A549 (cell line): ENCODE measurements at regions of chr15 and their contacts with region 1.

Region 1: DNA sequence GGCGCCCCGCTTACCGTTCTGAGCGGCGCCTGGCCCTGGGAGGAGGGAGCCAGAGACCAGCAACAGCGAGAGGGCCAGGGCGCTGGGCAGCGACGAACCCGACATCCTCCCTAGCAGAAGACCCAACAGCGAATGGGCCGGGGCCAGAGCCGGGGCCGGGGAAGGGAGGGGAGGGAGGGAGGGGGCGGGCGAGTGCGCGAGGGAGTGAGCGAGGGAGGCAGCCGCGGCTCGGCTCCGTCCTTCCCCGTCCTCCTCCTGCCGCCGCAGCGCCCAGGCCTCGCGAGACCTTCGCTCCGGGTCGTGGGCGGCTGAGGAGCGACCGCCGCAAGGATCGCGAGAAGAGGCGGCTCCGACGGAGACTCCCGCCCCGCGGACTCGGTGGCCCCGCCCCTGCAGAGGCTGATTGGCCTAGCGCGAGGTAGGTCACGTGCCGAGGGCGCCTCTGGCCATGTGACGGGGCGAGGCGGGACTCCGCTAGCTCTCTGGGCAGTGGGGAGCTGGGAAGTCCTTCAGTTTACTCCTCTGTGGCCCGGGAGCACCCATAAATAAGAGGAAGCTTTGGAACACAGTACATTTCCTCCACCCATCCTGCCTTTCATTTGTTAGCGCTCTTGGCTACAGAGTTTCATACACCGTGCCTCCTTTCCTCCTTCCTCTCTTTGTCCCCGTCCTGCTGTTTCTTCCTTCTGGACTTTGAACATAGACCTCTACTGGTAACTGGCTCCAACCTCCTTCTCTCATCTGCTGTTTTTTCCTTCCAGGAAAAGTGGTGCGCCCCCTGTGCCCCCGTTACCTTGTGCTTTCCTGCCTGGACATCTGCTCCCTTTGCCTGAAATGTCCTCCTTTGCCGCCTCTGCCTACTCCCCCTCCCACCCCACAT is at the start of gene NPTN:
- DNase-seq: peak; percentile 96 to 98
- ATAC-seq: peak; percentile 87 to 94
- H3K4me3 ChIP-seq: peak within 1 kb of the TSS; percentile 96
- H3K27ac ChIP-seq: peak within 1 kb of the TSS; percentile 95 to 96
- H3K4me1 ChIP-seq: peaks cover 51% of the 10 kb centered on the region
- CTCF ChIP-seq: peak; percentile 13; the same call in 1 of the 3 replicates
- EP300 ChIP-seq: no peak
- POLR2A ChIP-seq: peak; percentile 87
- RAD21 ChIP-seq: no peak
- polyA plus RNA-seq, gene NPTN: 201 and 253 TPM in 2 replicates

Region 2: DNA sequence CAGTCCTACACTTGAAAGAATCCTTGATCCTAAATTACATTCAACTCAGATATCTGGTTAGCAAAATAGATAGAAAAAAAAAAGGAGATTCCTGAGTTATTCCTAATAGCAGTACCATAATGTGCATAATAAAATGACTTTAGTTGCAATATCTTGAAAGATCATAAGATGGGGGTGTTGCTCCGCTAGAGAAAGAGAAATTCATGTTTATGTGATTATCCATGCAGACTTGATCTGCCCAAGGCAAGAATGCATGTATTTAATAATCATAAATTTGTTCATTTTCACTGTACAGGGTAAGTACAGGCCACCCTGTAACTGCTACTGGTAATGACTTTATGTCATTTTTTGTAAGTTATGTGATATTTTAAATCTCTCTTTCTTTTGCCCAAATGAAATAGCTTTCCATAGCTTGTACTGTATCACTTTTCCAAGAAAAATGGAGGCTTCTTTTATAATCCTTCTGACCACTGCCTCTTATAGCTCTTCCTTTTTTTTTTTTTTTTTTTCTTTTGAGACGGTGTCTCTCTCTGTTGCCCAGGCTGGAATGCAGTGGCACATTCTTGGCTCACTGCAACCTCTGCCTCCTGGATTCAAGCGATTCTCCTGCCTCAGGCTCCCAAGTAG is 349.1 kb before region 1 on chr15:
- CTCF ChIA-PET with region 1: interaction called, 11 read pairs
- POLR2A ChIA-PET with region 1: no interaction called
- DNase-seq: peak in 1 of 2 experiments; percentile 17
- ATAC-seq: peak; percentile 57; a peak in 4 of 6 replicates
- H3K4me3 ChIP-seq: no peak overlapping the region
- H3K27ac ChIP-seq: no peak overlapping the region
- H3K4me1 ChIP-seq: no peaks in the 10 kb centered on the region
- CTCF ChIP-seq: peak; percentile 37
- EP300 ChIP-seq: no peak
- POLR2A ChIP-seq: no peak
- RAD21 ChIP-seq: peak; percentile 52 to 58

Region 3: GRCh38 chr15:73368301-73369136 is 264.8 kb before region 1 on chr15 and contains the start of gene HCN4:
- CTCF ChIA-PET with region 1: no interaction called
- POLR2A ChIA-PET with region 1: no interaction called
- DNase-seq: peak in 1 of 2 experiments; percentile 66
- ATAC-seq: peak; percentile 37 to 56
- H3K4me3 ChIP-seq: peak within 1 kb of the TSS; percentile 97
- H3K27ac ChIP-seq: peak within 1 kb of the TSS; percentile 64 to 80
- H3K4me1 ChIP-seq: peaks cover 12% of the 10 kb centered on the region; the same call in 2 of the 3 replicates
- CTCF ChIP-seq: no peak
- EP300 ChIP-seq: no peak
- POLR2A ChIP-seq: no peak
- RAD21 ChIP-seq: no peak
- polyA plus RNA-seq, gene HCN4: 0.03 and 0.07 TPM in 2 replicates

Region 4: GRCh38 chr15:73550190-73550589 is 83.2 kb before region 1 on chr15:
- CTCF ChIA-PET with region 1: interaction called, 18 read pairs
- POLR2A ChIA-PET with region 1: interaction called, 3 read pairs
- DNase-seq: no peak
- ATAC-seq: no peak
- H3K4me3 ChIP-seq: no peak overlapping the region
- H3K27ac ChIP-seq: no peak overlapping the region
- H3K4me1 ChIP-seq: no peaks in the 10 kb centered on the region
- CTCF ChIP-seq: no peak
- EP300 ChIP-seq: no peak
- POLR2A ChIP-seq: no peak
- RAD21 ChIP-seq: no peak

Region 5: DNA sequence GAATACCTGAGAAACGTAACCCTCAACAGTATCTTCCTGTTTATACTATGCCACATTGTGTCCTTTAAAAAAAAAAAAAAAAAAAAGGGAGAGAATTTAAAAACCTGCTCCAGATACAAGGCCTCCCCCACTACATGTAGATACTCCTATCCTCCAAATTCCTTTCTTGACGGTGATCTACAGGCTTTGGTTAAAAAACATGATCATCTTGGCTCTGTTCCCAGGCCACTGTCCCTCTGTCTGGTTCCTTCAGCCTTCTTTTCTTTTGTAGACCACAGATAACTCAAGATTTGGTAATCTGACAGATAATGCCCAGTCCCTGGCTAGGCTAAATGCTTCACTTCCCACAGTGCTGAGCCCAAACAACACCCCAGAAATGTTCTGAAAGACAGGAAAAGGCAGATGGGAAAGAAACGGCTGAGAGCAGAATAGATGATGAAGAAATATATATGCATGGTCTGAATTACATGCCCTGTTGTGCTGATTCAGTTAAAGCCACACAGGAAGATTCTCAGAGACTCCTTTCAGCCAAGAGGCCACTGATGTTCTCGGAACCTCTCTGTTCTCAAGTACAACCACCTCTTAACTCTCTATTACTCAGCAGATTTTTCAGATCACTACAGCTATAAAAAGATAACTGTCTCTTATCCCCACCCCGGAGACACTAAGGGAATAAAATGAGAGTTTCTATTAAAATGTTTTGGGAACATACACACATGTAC is 48.5 kb before region 1 on chr15:
- CTCF ChIA-PET with region 1: interaction called, 17 read pairs
- POLR2A ChIA-PET with region 1: no interaction called
- DNase-seq: no peak
- ATAC-seq: no peak
- H3K4me3 ChIP-seq: no peak overlapping the region
- H3K27ac ChIP-seq: no peak overlapping the region
- H3K4me1 ChIP-seq: no peaks in the 10 kb centered on the region
- CTCF ChIP-seq: no peak
- EP300 ChIP-seq: no peak
- POLR2A ChIP-seq: no peak
- RAD21 ChIP-seq: no peak

Region 6: GRCh38 chr15:73617301-73617831 is 16.0 kb before region 1 on chr15:
- CTCF ChIA-PET with region 1: interaction called, 112 read pairs
- POLR2A ChIA-PET with region 1: interaction called, 5 read pairs
- DNase-seq: no peak
- ATAC-seq: no peak
- H3K4me3 ChIP-seq: no peak overlapping the region
- H3K27ac ChIP-seq: no peak overlapping the region
- H3K4me1 ChIP-seq: peaks cover 10% of the 10 kb centered on the region; the same call in 2 of the 3 replicates
- CTCF ChIP-seq: no peak
- EP300 ChIP-seq: no peak
- POLR2A ChIP-seq: no peak
- RAD21 ChIP-seq: no peak

Region 7: GRCh38 chr15:73677146-73677607 is 43.8 kb after region 1 on chr15:
- CTCF ChIA-PET with region 1: interaction called, 43 read pairs
- POLR2A ChIA-PET with region 1: no interaction called
- DNase-seq: peak; percentile 36 to 61
- ATAC-seq: peak; percentile 80 to 94; a peak in 4 of 6 replicates
- H3K4me3 ChIP-seq: no peak overlapping the region
- H3K27ac ChIP-seq: no peak overlapping the region
- H3K4me1 ChIP-seq: no peaks in the 10 kb centered on the region
- CTCF ChIP-seq: peak; percentile 47
- EP300 ChIP-seq: no peak
- POLR2A ChIP-seq: no peak
- RAD21 ChIP-seq: peak; percentile 36 to 52; a peak in 4 of 5 replicates

Region 8: DNA sequence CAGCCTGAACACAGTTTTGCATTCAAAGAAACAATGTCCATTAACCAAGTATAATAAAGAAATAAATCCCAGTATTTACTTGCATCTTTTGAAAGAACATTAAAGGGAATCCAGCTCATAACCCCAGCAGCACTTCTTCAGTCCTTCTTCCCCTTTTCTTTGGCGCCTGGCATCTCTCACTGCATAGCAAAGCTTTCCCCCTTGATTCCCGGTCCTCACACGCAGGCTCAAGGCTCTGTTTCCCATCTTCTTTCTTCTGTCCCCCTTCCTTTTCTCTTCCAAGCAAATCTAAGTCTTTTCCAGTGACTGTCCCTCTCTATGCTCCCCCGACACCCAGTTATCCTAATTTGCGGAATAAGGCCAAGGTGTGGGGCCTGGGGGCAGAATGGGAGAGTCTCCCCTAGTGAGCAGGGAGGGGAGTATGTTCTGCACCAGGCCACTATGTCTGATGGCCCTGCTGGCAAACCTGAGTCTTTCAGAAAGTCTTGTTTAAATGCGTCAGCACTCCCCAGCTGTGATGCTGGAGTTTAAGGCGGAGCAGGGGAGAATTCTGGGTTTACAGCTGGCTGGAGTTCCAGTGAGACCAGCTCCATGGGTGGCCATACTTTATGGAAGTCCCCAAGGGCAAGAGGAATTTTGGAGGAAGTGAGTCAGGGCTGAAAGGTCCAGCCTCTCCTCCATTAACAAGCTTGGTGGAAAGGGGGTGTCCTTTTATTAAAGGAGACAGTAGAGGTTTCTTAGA is 406.9 kb after region 1 on chr15:
- CTCF ChIA-PET with region 1: no interaction called
- POLR2A ChIA-PET with region 1: no interaction called
- DNase-seq: peak in 1 of 2 experiments; percentile 15
- ATAC-seq: peak in 1 of 2 experiments; percentile 34; a peak in 2 of 6 replicates
- H3K4me3 ChIP-seq: no peak overlapping the region
- H3K27ac ChIP-seq: peak overlapping the region in 1 of 2 experiments; percentile 48; a peak in 1 of 6 replicates
- H3K4me1 ChIP-seq: peaks cover 7% of the 10 kb centered on the region; the same call in 1 of the 3 replicates
- CTCF ChIP-seq: no peak
- EP300 ChIP-seq: no peak
- POLR2A ChIP-seq: no peak
- RAD21 ChIP-seq: no peak